WTC11 (cell line): ENCODE measurements at regions of chr5 and their contacts with region 1.

Region 1: GRCh38 chr5:18699681-18700080 is 1065.4 kb downstream of the TAF11L14 start:
- DNase-seq: no peak
- ATAC-seq: no peak
- H3K4me3 Mint-ChIP-seq: no peak overlapping the region
- H3K27ac Mint-ChIP-seq: no peak overlapping the region
- H3K4me1 Mint-ChIP-seq: peaks cover 7% of the 10 kb centered on the region
- H3K27me3 Mint-ChIP-seq: no peaks in the 10 kb centered on the region
- CTCF ChIP-seq: no peak

Region 2: GRCh38 chr5:18433336-18433735 is 266.3 kb before region 1 on chr5:
- CTCF ChIA-PET with region 1: no interaction called
- POLR2A ChIA-PET with region 1: no interaction called
- DNase-seq: no peak
- ATAC-seq: no peak
- H3K4me3 Mint-ChIP-seq: no peak overlapping the region
- H3K27ac Mint-ChIP-seq: no peak overlapping the region
- H3K4me1 Mint-ChIP-seq: peaks cover 2% of the 10 kb centered on the region; the same call in 1 of the 2 replicates
- H3K27me3 Mint-ChIP-seq: no peaks in the 10 kb centered on the region; the same call in 1 of the 2 replicates
- CTCF ChIP-seq: no peak

Region 3: GRCh38 chr5:18465833-18466591 is 233.7 kb before region 1 on chr5:
- CTCF ChIA-PET with region 1: interaction called, 25 read pairs
- POLR2A ChIA-PET with region 1: no interaction called
- DNase-seq: peak; percentile 66
- ATAC-seq: peak; percentile 99
- H3K4me3 Mint-ChIP-seq: no peak overlapping the region
- H3K27ac Mint-ChIP-seq: no peak overlapping the region
- H3K4me1 Mint-ChIP-seq: peaks cover 20% of the 10 kb centered on the region
- H3K27me3 Mint-ChIP-seq: no peaks in the 10 kb centered on the region
- CTCF ChIP-seq: peak; percentile 46; the same call in 1 of the 2 replicates